Psoas muscle (tissue), 8 donors: ENCODE measurements at regions of chr20 and their contacts with region 1.

Region 1: DNA sequence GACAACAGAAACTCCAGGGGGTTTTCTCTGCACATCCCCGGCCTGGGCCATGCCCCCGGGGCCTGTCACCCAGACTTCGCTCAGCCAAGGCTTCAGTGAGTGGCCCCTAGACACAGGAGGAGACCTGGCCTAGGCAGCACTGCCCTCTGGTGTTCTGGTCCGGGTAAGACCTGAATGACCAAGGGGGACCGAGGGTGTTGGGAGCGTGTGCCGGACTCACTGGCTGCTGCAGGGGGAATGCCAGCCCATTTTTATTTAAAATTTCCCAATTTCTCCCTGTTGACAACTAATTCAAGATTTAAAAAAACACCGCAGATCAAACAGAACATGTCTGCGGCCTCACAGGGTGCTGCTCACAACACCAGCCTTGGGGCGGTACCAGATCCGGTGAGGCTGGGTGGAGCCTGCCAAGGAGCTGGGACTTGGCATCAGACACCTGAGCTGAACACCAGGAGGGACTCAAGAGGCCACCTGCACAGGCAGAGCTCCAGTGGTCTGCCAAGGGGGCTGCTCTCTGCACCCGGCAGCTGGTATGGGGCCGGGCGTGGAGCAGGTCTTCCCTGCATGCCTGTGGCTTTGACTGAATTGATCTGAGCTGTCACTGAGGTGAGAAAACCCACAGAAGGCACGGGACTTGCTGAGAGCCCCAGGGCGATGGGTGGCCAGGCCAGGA is 47.8 kb downstream of the DSTN start:
- DNase-seq: peak in 1 of 2 donors; percentile 79
- ATAC-seq: peak; percentile 67 to 83 (median 76)
- H3K4me3 ChIP-seq: no peak overlapping the region
- H3K27ac ChIP-seq: no peak overlapping the region
- H3K4me1 ChIP-seq: peaks cover 6% of the 10 kb centered on the region
- H3K27me3 ChIP-seq: no peaks in the 10 kb centered on the region
- CTCF ChIP-seq: peak; percentile 67

Region 2: GRCh38 chr20:17504898-17505635 is 112.6 kb before region 1 on chr20:
- intact Hi-C with region 1: loop called (anchors 2 kb)
- DNase-seq: peak; percentile 49 to 68
- ATAC-seq: peak; percentile 68 to 89 (median 74)
- H3K4me3 ChIP-seq: peak overlapping the region; percentile 63
- H3K27ac ChIP-seq: no peak overlapping the region
- H3K4me1 ChIP-seq: no peaks in the 10 kb centered on the region
- H3K27me3 ChIP-seq: no peaks in the 10 kb centered on the region
- CTCF ChIP-seq: peak; percentile 74

Region 3: GRCh38 chr20:17810847-17811627 is 193.3 kb after region 1 on chr20:
- intact Hi-C with region 1: no loop called
- DNase-seq: no peak
- ATAC-seq: no peak
- H3K4me3 ChIP-seq: no peak overlapping the region
- H3K27ac ChIP-seq: no peak overlapping the region
- H3K4me1 ChIP-seq: peaks cover 5% of the 10 kb centered on the region
- H3K27me3 ChIP-seq: no peaks in the 10 kb centered on the region
- CTCF ChIP-seq: no peak